Sigmoid colon (tissue), 7 donors: ENCODE measurements at regions of chr2 and their contacts with region 1.

Region 1: GRCh38 chr2:191846515-191847476 is at the start of gene CAVIN2:
- DNase-seq: peak; percentile 90
- H3K4me3 ChIP-seq: peak within 1 kb of the TSS; percentile 49 to 72 (median 66)
- H3K27ac ChIP-seq: peak within 1 kb of the TSS; percentile 85 to 93 (median 90)
- H3K4me1 ChIP-seq: peaks cover 0 to 46% (median 31%) of the 10 kb centered on the region in 4 donors
- H3K27me3 ChIP-seq: no peaks in the 10 kb centered on the region
- CTCF ChIP-seq: no peak
- EP300 ChIP-seq: no peak
- POLR2A ChIP-seq: peak; percentile 51 to 71
- total RNA-seq, gene CAVIN2: 138 to 201 (median 190) TPM

Region 2: GRCh38 chr2:191677646-191678436 is 169.0 kb before region 1 on chr2 and contains the start of gene NABP1:
- intact Hi-C with region 1: loop called (anchors 2 kb)
- DNase-seq: peak; percentile 99
- H3K4me3 ChIP-seq: peak within 1 kb of the TSS; percentile 53 to 72 (median 59)
- H3K27ac ChIP-seq: peak within 1 kb of the TSS; percentile 85 to 96 (median 90)
- H3K4me1 ChIP-seq: peaks cover 0 to 16% (median 5%) of the 10 kb centered on the region in 4 donors
- H3K27me3 ChIP-seq: no peaks in the 10 kb centered on the region
- CTCF ChIP-seq: no peak
- EP300 ChIP-seq: peak in 1 of 4 donors; percentile 39
- POLR2A ChIP-seq: peak; percentile 87 to 89
- total RNA-seq, gene NABP1: 8.2 to 12.7 (median 9.8) TPM

Region 3: DNA sequence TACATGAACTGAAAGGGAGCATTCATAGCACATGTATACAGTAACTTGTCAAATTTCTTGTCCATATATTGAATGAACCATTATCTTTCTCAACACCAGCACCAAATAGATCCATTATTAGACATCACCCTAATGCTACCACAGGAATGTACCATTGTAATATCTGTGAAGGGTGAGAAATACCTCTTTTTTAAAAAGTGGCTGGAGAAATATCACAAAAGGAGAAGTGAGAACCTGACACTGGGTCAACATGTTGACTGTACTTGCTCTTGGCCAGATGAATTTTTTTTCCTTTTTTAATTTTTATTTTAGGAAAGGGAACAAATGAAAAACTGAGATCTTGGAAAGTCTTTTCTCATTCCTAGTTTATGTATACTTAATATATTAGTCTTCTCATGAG is 63.4 kb before region 1 on chr2:
- intact Hi-C with region 1: no loop called
- DNase-seq: no peak
- H3K4me3 ChIP-seq: no peak overlapping the region
- H3K27ac ChIP-seq: no peak overlapping the region
- H3K4me1 ChIP-seq: no peaks in the 10 kb centered on the region
- H3K27me3 ChIP-seq: no peaks in the 10 kb centered on the region
- CTCF ChIP-seq: no peak
- EP300 ChIP-seq: no peak
- POLR2A ChIP-seq: no peak

Region 4: GRCh38 chr2:191862156-191862775 is 15.5 kb after region 1 on chr2:
- intact Hi-C with region 1: loop called (anchors 2 kb)
- DNase-seq: no peak
- H3K4me3 ChIP-seq: no peak overlapping the region
- H3K27ac ChIP-seq: peak overlapping the region in 2 of 4 donors; percentile 83 to 88
- H3K4me1 ChIP-seq: peaks cover 0 to 53% (median 49%) of the 10 kb centered on the region in 4 donors
- H3K27me3 ChIP-seq: no peaks in the 10 kb centered on the region
- CTCF ChIP-seq: no peak
- EP300 ChIP-seq: no peak
- POLR2A ChIP-seq: no peak

Region 5: DNA sequence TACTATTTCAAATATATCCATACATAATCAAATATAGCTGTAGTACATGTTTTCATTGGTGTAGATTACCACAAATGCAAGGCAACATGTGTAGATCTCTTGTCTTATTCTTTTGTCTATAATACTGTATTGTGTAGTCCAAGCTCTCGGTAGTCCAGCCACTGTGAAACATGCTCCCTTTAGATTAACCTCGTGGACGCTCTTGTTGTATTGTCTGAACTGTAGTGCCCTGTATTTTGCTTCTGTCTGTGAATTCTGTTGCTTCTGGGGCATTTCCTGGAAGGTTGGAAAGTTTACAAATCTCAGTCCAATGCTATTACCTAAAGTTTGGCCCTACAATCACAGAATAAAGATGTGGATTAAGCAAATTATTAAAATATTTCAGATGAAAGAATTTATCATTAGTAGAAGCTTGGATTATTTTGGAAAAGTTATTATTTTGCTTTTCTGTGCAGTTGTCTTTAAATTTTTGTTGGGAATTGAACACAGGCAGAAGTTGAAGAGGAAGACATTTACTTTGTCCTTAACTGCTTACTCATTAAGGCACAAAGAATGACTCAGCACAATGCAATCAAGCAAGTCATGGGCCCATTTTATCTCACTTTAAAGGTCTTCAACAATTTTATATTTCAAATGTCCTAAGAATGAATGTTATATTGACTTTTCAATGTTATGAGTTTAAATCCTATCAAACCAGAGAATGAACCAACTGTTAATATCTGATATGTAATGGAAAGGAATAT is 103.5 kb after region 1 on chr2:
- intact Hi-C with region 1: loop called (anchors 5 kb)
- DNase-seq: no peak
- H3K4me3 ChIP-seq: no peak overlapping the region
- H3K27ac ChIP-seq: no peak overlapping the region
- H3K4me1 ChIP-seq: peaks cover 0 to 38% (median 20%) of the 10 kb centered on the region in 4 donors
- H3K27me3 ChIP-seq: no peaks in the 10 kb centered on the region
- CTCF ChIP-seq: no peak
- EP300 ChIP-seq: no peak
- POLR2A ChIP-seq: no peak

Region 6: GRCh38 chr2:192307530-192307929 is 460.7 kb after region 1 on chr2:
- intact Hi-C with region 1: no loop called
- DNase-seq: no peak
- H3K4me3 ChIP-seq: no peak overlapping the region
- H3K27ac ChIP-seq: no peak overlapping the region
- H3K4me1 ChIP-seq: no peaks in the 10 kb centered on the region
- H3K27me3 ChIP-seq: no peaks in the 10 kb centered on the region
- CTCF ChIP-seq: no peak
- EP300 ChIP-seq: no peak
- POLR2A ChIP-seq: no peak